Ovary (tissue), 10 donors: ENCODE measurements at regions of chr3 and their contacts with region 1.

Region 1: GRCh38 chr3:111194048-111194447 is 122.4 kb downstream of the NECTIN3 start:
- DNase-seq: no peak
- H3K4me3 ChIP-seq: no peak overlapping the region
- H3K27ac ChIP-seq: no peak overlapping the region
- H3K4me1 ChIP-seq: no peaks in the 10 kb centered on the region
- H3K27me3 ChIP-seq: no peaks in the 10 kb centered on the region
- CTCF ChIP-seq: no peak
- EP300 ChIP-seq: no peak
- POLR2A ChIP-seq: no peak

Region 2: GRCh38 chr3:111338059-111338698 is 144.1 kb after region 1 on chr3:
- intact Hi-C with region 1: loop called in 1 of 4 experiments (anchors 10 kb)
- DNase-seq: peak in 3 of 5 donors; percentile 17 to 48 (median 34)
- H3K4me3 ChIP-seq: no peak overlapping the region
- H3K27ac ChIP-seq: no peak overlapping the region
- H3K4me1 ChIP-seq: peaks cover 4% of the 10 kb centered on the region
- H3K27me3 ChIP-seq: no peaks in the 10 kb centered on the region
- CTCF ChIP-seq: no peak
- EP300 ChIP-seq: no peak
- POLR2A ChIP-seq: no peak